Right lobe of liver (tissue), 6 donors: ENCODE measurements at regions of chr6 and their contacts with region 1.

Region 1: GRCh38 chr6:138287144-138287955 is 69.1 kb upstream of the PBOV1 start:
- DNase-seq: peak in 2 of 3 donors; percentile 45 to 66
- ATAC-seq: peak; percentile 73 to 78 (median 78)
- H3K4me3 ChIP-seq: no peak overlapping the region
- H3K27ac ChIP-seq: no peak overlapping the region
- H3K4me1 ChIP-seq: peaks cover 0 to 13% (median 0%) of the 10 kb centered on the region in 4 donors
- H3K27me3 ChIP-seq: no peaks in the 10 kb centered on the region
- CTCF ChIP-seq: peak; percentile 59 to 84 (median 70)
- POLR2A ChIP-seq: no peak

Region 2: GRCh38 chr6:138115877-138116660 is 171.3 kb before region 1 on chr6:
- intact Hi-C with region 1: loop called (anchors 5 to 10 kb)
- DNase-seq: peak; percentile 52 to 63 (median 57)
- ATAC-seq: peak; percentile 95 to 97 (median 96)
- H3K4me3 ChIP-seq: no peak overlapping the region
- H3K27ac ChIP-seq: peak overlapping the region in 2 of 3 donors; percentile 27 to 45
- H3K4me1 ChIP-seq: no peaks in the 10 kb centered on the region
- H3K27me3 ChIP-seq: no peaks in the 10 kb centered on the region
- CTCF ChIP-seq: peak; percentile 70 to 91 (median 72)
- POLR2A ChIP-seq: no peak

Region 3: GRCh38 chr6:138145402-138145801 is 141.9 kb before region 1 on chr6:
- intact Hi-C with region 1: no loop called
- DNase-seq: no peak
- ATAC-seq: no peak
- H3K4me3 ChIP-seq: no peak overlapping the region
- H3K27ac ChIP-seq: no peak overlapping the region
- H3K4me1 ChIP-seq: no peaks in the 10 kb centered on the region
- H3K27me3 ChIP-seq: no peaks in the 10 kb centered on the region
- CTCF ChIP-seq: no peak
- POLR2A ChIP-seq: no peak

Region 4: DNA sequence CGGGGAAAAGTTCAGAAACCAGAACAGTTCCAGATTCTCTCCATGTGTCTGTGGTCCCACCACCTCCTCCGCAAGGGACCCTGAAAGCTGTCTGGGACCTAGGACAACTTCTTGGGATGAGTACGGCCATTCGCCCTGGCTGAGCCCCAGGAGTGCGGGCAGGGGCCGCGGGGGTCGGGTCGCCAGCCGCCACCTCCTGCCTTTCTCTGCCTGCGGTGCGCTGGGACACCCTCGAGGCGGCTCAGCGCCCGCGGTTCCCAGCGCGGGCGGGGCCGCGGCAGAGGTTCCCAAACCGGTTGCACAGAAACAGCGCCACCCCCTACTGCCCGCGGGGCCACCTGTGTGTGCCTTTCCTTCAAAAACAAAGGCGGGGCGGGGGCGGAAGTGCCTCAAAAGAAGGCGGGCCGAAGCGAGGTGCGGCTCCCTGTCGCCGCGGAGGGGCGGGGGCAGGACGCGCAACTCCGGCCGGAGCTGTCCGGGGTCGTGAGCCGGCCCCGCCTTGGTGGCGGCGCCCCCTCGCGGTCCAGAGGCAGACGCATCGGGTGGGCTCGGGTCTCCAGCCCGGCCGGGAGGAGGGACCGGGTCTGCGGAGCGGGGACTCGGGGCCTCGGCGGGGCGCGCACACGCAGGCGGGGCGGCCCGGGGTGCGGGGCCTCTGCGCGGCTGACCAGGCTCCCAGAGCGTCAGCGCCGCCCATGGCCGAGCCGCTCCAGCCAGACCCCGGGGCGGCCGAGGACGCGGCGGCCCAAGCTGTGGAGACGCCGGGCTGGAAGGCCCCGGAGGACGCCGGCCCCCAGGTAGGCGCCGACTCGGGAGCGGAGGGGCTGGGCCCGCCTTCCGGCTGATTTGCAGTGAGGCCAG is 116.7 kb after region 1 on chr6 and contains the start of gene HEBP2:
- intact Hi-C with region 1: loop called in 1 of 2 experiments (anchors 10 kb)
- DNase-seq: peak; percentile 99
- ATAC-seq: peak; percentile 91 to 95 (median 92)
- H3K4me3 ChIP-seq: peak within 1 kb of the TSS; percentile 61 to 78 (median 78)
- H3K27ac ChIP-seq: peak within 1 kb of the TSS; percentile 76 to 97 (median 89)
- H3K4me1 ChIP-seq: peaks cover 0 to 23% (median 8%) of the 10 kb centered on the region in 4 donors
- H3K27me3 ChIP-seq: no peaks in the 10 kb centered on the region
- CTCF ChIP-seq: peak; percentile 61 to 68 (median 63)
- POLR2A ChIP-seq: peak; percentile 87
- total RNA-seq, gene HEBP2: 37.3 to 69.2 (median 53.0) TPM